ENCODE measurements at regions of chr3 and their contacts with region 1.

Region 1: DNA sequence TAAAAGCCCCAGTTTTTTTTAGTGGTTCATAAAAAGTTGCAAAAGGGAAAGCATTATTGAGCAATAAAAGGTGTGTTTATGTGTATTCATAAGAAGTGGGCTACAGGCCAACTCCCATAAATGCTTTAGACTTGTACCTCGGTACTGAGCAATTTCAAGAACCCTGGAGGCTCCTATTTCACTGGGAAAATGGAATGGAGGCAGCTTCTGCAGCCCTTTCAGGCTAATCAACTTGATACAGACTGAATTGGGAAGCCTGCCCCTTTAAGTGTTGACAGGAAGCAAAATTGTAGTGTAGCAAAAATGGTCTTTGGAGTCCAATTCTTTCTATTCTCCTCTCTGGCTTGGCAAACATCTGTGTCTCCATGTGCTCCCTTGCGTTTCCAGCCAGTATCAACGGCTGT is 118.8 kb downstream of the ECT2 start:
- DNase-seq: no peak
- H3K4me3 ChIP-seq: no peak overlapping the region
- H3K27ac ChIP-seq: peak overlapping the region; percentile 19
- H3K4me1 ChIP-seq: peaks cover 26% of the 10 kb centered on the region
- H3K27me3 ChIP-seq: no peaks in the 10 kb centered on the region
- CTCF ChIP-seq: no peak
- POLR2A ChIP-seq: no peak

Region 2: DNA sequence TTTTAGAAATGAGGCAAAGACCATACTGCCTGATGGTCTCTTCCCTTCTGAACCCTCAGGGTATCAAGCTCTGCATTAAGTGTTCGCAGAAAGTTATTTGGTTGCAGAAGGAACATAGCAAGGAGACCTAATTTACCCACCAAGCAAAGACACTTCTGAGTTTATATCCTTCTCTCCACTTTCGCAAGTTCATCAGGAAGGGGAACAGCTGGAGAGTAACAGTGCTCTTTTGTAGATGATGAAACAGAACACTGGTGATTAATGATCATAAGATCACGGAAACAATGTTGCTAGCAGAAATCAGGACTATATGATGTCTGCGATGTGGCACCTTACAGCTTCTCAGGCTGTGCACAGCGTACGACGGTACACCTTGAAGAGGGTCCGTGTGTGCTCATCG is 220.6 kb before region 1 on chr3:
- CTCF ChIA-PET with region 1: no interaction called
- POLR2A ChIA-PET with region 1: no interaction called
- dilution Hi-C with region 1: no loop called
- intact Hi-C with region 1: no loop called
- DNase-seq: no peak
- H3K4me3 ChIP-seq: no peak overlapping the region
- H3K27ac ChIP-seq: no peak overlapping the region
- H3K4me1 ChIP-seq: peaks cover 11% of the 10 kb centered on the region
- H3K27me3 ChIP-seq: no peaks in the 10 kb centered on the region
- CTCF ChIP-seq: no peak
- POLR2A ChIP-seq: no peak

Region 3: DNA sequence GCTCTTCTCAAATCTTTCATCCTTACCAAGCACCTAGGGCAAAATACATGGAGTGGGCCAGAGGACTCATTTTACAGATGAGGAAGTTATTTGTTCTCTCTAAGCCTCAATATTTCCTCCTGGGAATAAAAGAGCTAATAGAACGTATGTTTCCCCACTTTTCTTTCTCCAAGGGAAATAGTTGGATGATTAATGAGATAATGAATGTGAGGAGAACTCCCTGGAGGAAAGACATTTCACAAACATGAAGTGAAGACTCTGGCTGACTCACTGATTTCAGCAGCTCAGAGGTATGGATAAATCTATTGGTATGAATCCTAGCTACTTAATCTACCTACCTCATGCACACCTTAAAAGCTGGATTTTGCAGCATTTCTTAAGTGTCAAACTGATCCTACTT is 20.5 kb before region 1 on chr3:
- CTCF ChIA-PET with region 1: interaction called, 4 read pairs
- POLR2A ChIA-PET with region 1: no interaction called
- dilution Hi-C with region 1: no loop called
- intact Hi-C with region 1: loop called (anchors 2 kb)
- DNase-seq: peak; percentile 63
- H3K4me3 ChIP-seq: no peak overlapping the region
- H3K27ac ChIP-seq: no peak overlapping the region
- H3K4me1 ChIP-seq: peaks cover 16% of the 10 kb centered on the region
- H3K27me3 ChIP-seq: no peaks in the 10 kb centered on the region
- CTCF ChIP-seq: no peak
- POLR2A ChIP-seq: no peak